ENCODE measurements at regions of chr16 and their contacts with region 1.

Region 1: DNA sequence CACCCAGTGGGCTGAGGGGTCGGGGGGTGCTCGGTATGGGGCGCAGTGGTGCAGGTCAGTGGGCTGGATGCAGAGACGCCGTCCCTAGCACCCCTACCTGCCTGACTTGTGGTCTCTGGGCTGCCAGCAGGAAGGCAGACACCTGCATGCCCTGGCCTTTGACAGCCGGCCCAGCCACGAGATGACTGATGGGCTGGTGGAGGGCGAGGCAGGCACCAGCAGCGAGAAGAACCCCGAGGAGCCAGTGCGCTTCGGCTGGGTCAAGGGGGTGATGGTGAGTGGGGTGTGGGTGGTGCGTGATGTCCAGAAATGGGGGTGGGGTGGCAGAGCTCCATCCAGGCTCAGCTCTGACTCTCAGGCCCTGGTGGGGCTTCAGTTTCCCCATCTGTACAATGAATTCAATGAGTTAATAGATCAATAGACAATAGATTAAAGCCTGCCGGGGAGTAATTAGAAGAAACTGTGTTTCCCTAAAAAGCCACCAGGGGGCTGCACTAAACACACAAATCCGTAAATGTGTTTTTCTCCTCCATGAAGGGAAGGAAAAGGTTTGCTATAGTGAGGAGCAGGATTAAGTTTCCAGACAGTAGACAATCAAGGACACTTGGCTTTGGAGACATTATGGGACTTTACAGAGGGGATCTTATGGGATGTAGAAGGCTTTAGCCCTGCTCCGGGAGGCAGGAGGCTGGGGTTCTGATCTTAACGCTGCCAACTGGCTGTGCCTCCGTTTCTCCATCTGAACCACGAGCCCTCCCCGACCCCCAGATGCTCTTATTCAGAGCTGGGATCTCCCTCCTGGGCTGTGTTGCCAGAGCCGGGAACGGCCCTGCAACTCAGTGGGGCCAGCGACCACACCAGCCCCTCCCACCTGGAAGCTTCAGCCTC is 2.2 kb downstream of the SLC12A3 start:
- DNase-seq: peak in 4 of 5 donors; percentile 31 to 64 (median 42)
- H3K4me3 ChIP-seq: no peak overlapping the region
- H3K27ac ChIP-seq: no peak overlapping the region
- H3K4me1 ChIP-seq: peaks cover 2% of the 10 kb centered on the region
- H3K27me3 ChIP-seq: no peaks in the 10 kb centered on the region
- CTCF ChIP-seq: peak; percentile 66 to 90 (median 84)
- EP300 ChIP-seq: no peak
- POLR2A ChIP-seq: no peak

Region 2: GRCh38 chr16:56793492-56793891 is 73.7 kb before region 1 on chr16:
- intact Hi-C with region 1: loop called in 1 of 4 experiments (anchors 5 kb)
- DNase-seq: no peak
- H3K4me3 ChIP-seq: no peak overlapping the region
- H3K27ac ChIP-seq: no peak overlapping the region
- H3K4me1 ChIP-seq: peaks cover 3% of the 10 kb centered on the region
- H3K27me3 ChIP-seq: no peaks in the 10 kb centered on the region
- CTCF ChIP-seq: peak in 1 of 3 donors; percentile 23
- EP300 ChIP-seq: no peak
- POLR2A ChIP-seq: no peak

Region 3: GRCh38 chr16:56931892-56932720 is 64.9 kb after region 1 on chr16 and contains the start of gene HERPUD1:
- intact Hi-C with region 1: loop called in 1 of 4 experiments (anchors 10 kb)
- DNase-seq: peak; percentile 98 to 99 (median 99)
- H3K4me3 ChIP-seq: peak within 1 kb of the TSS; percentile 95
- H3K27ac ChIP-seq: peak within 1 kb of the TSS; percentile 94 to 98
- H3K4me1 ChIP-seq: peaks cover 4% of the 10 kb centered on the region
- H3K27me3 ChIP-seq: no peaks in the 10 kb centered on the region
- CTCF ChIP-seq: peak in 2 of 3 donors; percentile 8 to 31
- EP300 ChIP-seq: peak; percentile 72
- POLR2A ChIP-seq: peak; percentile 97
- total RNA-seq, gene HERPUD1: 95.4 to 299 (median 170) TPM

Region 4: GRCh38 chr16:56950881-56951771 is 83.9 kb after region 1 on chr16:
- intact Hi-C with region 1: loop called in 3 of 4 experiments (anchors 5 kb)
- DNase-seq: peak; percentile 39 to 73 (median 52)
- H3K4me3 ChIP-seq: no peak overlapping the region
- H3K27ac ChIP-seq: no peak overlapping the region
- H3K4me1 ChIP-seq: no peaks in the 10 kb centered on the region
- H3K27me3 ChIP-seq: no peaks in the 10 kb centered on the region
- CTCF ChIP-seq: peak in 2 of 3 donors; percentile 28 to 42
- EP300 ChIP-seq: no peak
- POLR2A ChIP-seq: no peak

Region 5: DNA sequence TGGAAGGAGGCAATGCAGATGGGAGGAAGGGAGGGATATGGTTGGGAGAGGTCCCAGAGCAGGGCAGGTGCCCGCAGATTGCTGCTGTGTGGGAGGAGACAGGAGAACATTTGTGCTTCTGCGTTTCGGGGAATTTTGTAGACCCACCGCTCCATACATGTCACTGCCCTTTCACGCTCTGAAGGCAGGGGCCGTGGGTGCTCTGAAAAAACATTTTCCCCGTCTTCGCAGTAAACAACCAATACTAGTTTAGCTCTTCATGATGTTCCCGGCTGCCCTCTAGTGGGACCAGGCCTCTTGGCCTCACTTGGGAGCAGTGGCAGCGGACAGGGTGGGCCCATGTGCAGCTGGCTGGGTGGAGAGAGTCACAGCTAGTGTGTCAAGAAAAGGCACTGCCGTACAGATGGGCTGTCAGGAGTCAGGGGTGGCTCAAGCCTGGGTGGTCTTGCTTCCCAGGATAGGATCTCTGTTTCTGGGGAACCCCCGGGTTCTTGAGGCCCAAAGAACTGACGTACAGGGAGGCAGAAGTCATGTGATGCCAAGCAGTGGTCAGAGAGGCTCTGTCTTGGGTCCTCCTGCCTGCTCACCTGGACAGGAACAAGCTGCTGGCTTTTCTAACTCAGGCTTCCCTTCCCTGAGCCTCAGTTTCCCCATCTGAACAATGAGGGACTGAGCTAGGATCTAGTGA is 178.7 kb after region 1 on chr16:
- intact Hi-C with region 1: loop called (anchors 5 to 10 kb)
- DNase-seq: peak; percentile 71 to 82 (median 79)
- H3K4me3 ChIP-seq: no peak overlapping the region
- H3K27ac ChIP-seq: no peak overlapping the region
- H3K4me1 ChIP-seq: peaks cover 3% of the 10 kb centered on the region
- H3K27me3 ChIP-seq: no peaks in the 10 kb centered on the region
- CTCF ChIP-seq: peak; percentile 48 to 58 (median 51)
- EP300 ChIP-seq: no peak
- POLR2A ChIP-seq: no peak

Measured in ovary (tissue), 10 donors.